Heart right ventricle (tissue), 16 donors: ENCODE measurements at regions of chr1 and their contacts with region 1.

Region 1: GRCh38 chr1:182789138-182790076 is at the start of gene NPL:
- DNase-seq: peak; percentile 82 to 86
- ATAC-seq: peak; percentile 96 to 98 (median 97)
- H3K4me3 ChIP-seq: peak within 1 kb of the TSS; percentile 10 to 76 (median 66)
- H3K27ac ChIP-seq: peak within 1 kb of the TSS in 8 of 10 donors; percentile 21 to 93 (median 65)
- H3K4me1 ChIP-seq: peaks cover 0 to 36% (median 7%) of the 10 kb centered on the region in 9 donors
- H3K27me3 ChIP-seq: no peaks in the 10 kb centered on the region
- CTCF ChIP-seq: no peak
- total RNA-seq, gene NPL: 1.8 to 26.5 (median 3.6) TPM

Region 2: GRCh38 chr1:182446033-182446669 is 343.3 kb before region 1 on chr1:
- intact Hi-C with region 1: loop called in 7 of 10 experiments (anchors 5 to 10 kb)
- DNase-seq: peak in 1 of 2 donors; percentile 7
- ATAC-seq: peak in 1 of 8 donors; percentile 48
- H3K4me3 ChIP-seq: no peak overlapping the region
- H3K27ac ChIP-seq: no peak overlapping the region
- H3K4me1 ChIP-seq: peaks cover 0 to 3% (median 0%) of the 10 kb centered on the region in 9 donors
- H3K27me3 ChIP-seq: no peaks in the 10 kb centered on the region
- CTCF ChIP-seq: peak; percentile 13 to 78 (median 64)

Region 3: DNA sequence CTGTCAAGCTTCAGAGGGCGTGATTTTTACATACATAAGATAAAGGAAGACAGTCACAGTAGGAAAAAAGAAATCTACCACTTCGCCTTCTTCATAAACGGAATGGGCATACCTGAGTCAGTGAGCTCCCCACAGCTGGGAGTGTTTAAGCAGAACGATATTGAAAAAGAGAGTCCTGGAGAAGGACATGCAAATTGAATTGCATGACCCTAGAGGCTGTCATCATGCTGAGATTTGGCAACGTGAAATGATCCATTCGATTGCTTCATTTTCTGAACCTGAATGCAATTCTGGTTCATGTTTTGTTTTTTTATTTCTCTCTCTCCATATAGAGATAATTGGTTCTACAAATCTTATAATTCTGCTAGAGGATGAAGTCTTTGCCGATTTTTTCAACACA is 335.8 kb before region 1 on chr1:
- intact Hi-C with region 1: loop called in 7 of 10 experiments (anchors 5 to 10 kb)
- DNase-seq: no peak
- ATAC-seq: no peak
- H3K4me3 ChIP-seq: no peak overlapping the region
- H3K27ac ChIP-seq: no peak overlapping the region
- H3K4me1 ChIP-seq: no peaks in the 10 kb centered on the region
- H3K27me3 ChIP-seq: peaks cover 0 to 9% (median 3%) of the 10 kb centered on the region in 7 donors
- CTCF ChIP-seq: no peak

Region 4: DNA sequence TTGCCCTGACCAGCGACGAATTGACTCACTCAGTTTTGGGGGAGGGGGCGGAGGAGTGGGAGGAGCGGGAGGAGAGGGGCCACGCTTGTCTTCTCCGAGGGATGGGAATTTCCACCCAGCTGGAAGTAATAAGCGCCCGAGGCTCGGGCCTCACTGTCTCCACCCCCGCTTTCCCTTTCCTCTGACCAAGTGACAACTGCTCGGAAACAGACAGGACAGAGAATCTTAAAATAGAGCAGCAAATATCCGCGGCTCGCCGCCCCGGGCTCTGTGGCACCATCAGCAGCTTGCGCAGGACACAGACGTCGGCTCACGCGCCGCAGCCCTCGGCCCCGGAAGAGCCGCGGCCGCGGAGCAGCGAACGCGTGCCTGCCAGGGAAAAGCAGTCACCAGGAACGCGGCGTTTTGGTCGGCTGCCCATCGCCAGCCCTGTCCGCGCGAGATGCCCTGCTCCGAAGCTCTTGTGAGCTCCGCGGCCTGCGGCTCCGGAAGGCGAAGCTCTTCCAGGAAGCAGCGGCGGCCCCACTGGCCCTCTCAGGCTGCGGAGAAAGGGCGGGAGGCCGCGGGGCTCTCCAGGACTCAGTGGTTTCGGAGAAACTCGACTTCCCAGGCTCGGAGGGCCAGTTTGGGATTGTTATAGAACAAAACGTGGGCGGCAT is 174.5 kb before region 1 on chr1:
- intact Hi-C with region 1: loop called in 1 of 10 experiments (anchors 5 kb)
- DNase-seq: peak; percentile 83 to 91
- ATAC-seq: peak; percentile 85 to 94 (median 92)
- H3K4me3 ChIP-seq: peak overlapping the region; percentile 19 to 61 (median 56)
- H3K27ac ChIP-seq: peak overlapping the region; percentile 86 to 98 (median 92)
- H3K4me1 ChIP-seq: peaks cover 0 to 34% (median 21%) of the 10 kb centered on the region in 9 donors
- H3K27me3 ChIP-seq: peaks cover 0 to 47% (median 0%) of the 10 kb centered on the region in 7 donors
- CTCF ChIP-seq: no peak

Region 5: DNA sequence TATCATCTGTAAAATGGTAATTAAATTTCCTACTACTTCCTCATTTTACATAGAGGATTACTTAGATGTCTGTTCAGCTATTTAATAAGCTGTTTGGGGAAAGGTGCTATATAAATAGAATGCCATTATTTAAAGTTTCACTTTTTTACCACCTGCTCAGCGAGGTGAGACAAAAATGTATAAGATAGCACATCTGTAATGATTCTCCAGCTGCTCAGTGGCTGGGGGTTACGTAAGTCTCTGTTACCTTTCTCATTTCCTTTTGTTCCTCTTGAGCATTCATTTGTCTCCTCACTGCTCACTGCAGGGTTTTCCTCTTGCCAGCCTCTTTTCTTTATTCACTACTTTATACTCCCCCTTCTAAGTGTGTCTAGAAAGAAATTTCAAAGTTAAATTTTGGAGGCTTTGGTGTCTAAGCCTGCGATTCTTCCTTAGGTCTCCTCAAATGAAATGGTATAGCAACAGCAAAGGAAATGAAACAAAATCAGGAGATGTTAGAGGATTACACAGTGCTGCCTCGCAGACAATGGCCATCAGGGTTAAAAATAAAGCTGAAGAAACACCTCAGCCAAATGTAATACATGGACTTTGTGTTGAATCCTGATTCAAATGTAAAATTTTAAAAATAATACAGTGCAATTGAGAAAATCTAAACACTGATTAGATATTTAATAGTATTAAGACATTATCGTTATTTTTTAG is 111.9 kb before region 1 on chr1:
- intact Hi-C with region 1: loop called in 3 of 10 experiments (anchors 5 to 10 kb)
- DNase-seq: no peak
- ATAC-seq: no peak
- H3K4me3 ChIP-seq: no peak overlapping the region
- H3K27ac ChIP-seq: peak overlapping the region in 2 of 10 donors; percentile 46 to 65
- H3K4me1 ChIP-seq: peaks cover 2 to 67% (median 28%) of the 10 kb centered on the region in 9 donors
- H3K27me3 ChIP-seq: peaks cover 0 to 24% (median 0%) of the 10 kb centered on the region in 7 donors
- CTCF ChIP-seq: no peak

Region 6: DNA sequence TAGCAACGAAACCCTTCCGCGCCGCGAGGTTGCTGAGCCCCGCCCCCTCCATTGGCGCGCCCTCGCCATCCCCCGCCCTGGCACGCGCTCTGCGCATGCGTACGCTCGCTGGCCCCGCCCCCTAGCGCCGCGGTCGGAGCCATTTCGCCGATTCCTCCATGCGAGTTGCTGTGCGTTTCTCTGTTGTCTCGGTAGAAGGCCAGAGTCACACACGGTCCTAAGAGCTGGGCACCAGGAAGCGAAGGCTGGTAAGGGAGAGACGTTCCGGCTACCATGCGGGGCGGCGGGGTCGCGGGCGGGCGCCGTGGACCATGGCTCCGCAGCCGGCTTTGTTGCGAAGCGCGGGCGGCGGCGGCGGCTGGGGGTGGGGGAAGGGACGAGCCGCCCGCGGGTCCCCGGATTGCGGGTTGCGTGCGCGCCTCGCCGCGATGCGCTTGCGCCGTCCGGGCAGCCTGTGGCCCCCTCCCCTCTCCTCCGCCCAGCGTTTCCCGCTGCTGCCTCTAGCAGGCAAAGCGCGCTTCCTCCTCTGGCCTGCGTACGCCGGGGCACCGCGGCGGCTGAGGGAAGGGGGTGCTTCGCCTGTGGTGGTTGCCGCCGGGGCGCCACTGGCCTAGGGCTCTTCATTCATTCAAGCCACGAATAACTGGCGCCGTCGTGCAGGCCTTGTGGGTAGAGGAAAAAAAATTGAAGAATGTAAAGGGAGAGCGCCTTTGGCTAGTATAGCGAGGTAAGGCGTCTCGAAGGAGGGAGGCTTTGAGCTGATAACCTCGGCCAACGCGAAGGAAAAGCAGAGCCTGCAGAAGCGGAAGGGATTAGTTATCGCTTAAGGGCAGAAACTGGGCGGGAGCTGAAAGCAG is 50.0 kb after region 1 on chr1 and contains the start of gene DHX9:
- intact Hi-C with region 1: loop called in 1 of 10 experiments (anchors 2 kb)
- DNase-seq: peak; percentile 94 to 96
- ATAC-seq: peak; percentile 92 to 97 (median 94)
- H3K4me3 ChIP-seq: peak within 1 kb of the TSS; percentile 60 to 93 (median 76)
- H3K27ac ChIP-seq: peak within 1 kb of the TSS; percentile 70 to 94 (median 92)
- H3K4me1 ChIP-seq: peaks cover 5 to 54% (median 34%) of the 10 kb centered on the region in 9 donors
- H3K27me3 ChIP-seq: no peaks in the 10 kb centered on the region
- CTCF ChIP-seq: peak in 4 of 9 donors; percentile 15 to 43 (median 37)
- total RNA-seq, gene DHX9: 48.0 to 69.4 (median 55.2) TPM